Activated B cell treated with CpG ODN at 0.5 μM for 24 hours (primary cell): ENCODE measurements at regions of chr6 and their contacts with region 1.

Region 1: DNA sequence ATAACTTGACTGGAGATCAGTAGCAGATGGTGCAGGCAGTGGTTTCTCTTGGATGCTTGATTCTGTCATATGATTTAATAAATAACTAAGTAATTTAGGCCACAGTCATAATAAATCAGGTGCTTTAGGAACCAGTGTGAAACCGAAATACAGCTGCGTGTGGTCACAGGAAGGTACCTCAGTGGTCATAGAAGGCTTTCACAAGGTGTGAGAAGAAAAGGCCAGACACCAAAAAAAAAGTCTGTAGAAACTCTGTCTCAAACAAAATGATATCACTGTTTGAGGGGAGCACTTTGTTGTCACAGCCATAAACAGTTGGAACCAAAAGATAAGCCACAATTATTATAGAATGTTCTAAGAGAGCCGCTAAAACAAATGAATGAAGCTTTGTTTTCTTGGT is 56.5 kb downstream of the ARMC2 start:
- DNase-seq: no peak
- ATAC-seq: peak; percentile 81
- H3K4me3 Mint-ChIP-seq: peak overlapping the region; percentile 4
- H3K27ac Mint-ChIP-seq: peak overlapping the region; percentile 68
- H3K4me1 Mint-ChIP-seq: peaks cover 51% of the 10 kb centered on the region
- H3K27me3 Mint-ChIP-seq: no peaks in the 10 kb centered on the region
- CTCF ChIP-seq: no peak

Region 2: DNA sequence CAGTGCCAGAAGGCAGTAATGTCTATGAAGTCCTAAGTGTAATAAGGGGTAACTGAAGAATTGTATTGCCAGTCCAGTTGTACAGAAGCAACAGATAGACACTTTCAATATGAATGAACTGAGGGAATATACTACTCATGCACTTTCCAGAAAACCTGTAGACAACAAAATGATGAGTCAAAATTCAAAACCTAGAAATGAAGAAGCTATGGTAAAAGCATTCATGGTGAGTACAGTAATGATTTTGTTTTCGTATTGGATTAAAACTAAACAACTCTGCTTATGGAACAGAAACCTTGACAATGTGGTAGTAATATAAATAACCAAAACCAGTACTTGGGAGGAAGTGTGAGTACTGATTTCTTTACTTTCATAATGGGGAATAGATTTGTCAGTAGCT is 21.6 kb before region 1 on chr6:
- CTCF ChIA-PET with region 1: no interaction called
- POLR2A ChIA-PET with region 1: no interaction called
- intact Hi-C with region 1: loop called (anchors 2 kb)
- DNase-seq: no peak
- ATAC-seq: peak; percentile 40
- H3K4me3 Mint-ChIP-seq: no peak overlapping the region
- H3K27ac Mint-ChIP-seq: no peak overlapping the region
- H3K4me1 Mint-ChIP-seq: peaks cover 27% of the 10 kb centered on the region
- H3K27me3 Mint-ChIP-seq: no peaks in the 10 kb centered on the region
- CTCF ChIP-seq: no peak

Region 3: GRCh38 chr6:109009236-109009961 is 104.7 kb after region 1 on chr6:
- CTCF ChIA-PET with region 1: no interaction called
- POLR2A ChIA-PET with region 1: interaction called, 3 read pairs
- intact Hi-C with region 1: loop called (anchors 2 kb)
- DNase-seq: peak; percentile 87
- ATAC-seq: peak; percentile 97
- H3K4me3 Mint-ChIP-seq: peak overlapping the region; percentile 97
- H3K27ac Mint-ChIP-seq: peak overlapping the region; percentile 95
- H3K4me1 Mint-ChIP-seq: peaks cover 65% of the 10 kb centered on the region
- H3K27me3 Mint-ChIP-seq: no peaks in the 10 kb centered on the region
- CTCF ChIP-seq: no peak